Activated naive CD4-positive, alpha-beta T cell treated with anti-CD3 and anti-CD28 coated beads for 36 hours (primary cell): ENCODE measurements at regions of chr6 and their contacts with region 1.

Region 1: GRCh38 chr6:87825821-87826221 is 123.8 kb upstream of the AKIRIN2 start:
- DNase-seq: no peak
- H3K4me3 Mint-ChIP-seq: no peak overlapping the region
- H3K27ac Mint-ChIP-seq: no peak overlapping the region
- H3K4me1 Mint-ChIP-seq: peaks cover 14% of the 10 kb centered on the region
- H3K27me3 Mint-ChIP-seq: no peaks in the 10 kb centered on the region

Region 2: GRCh38 chr6:86380571-86381136 is 1445.2 kb before region 1 on chr6:
- CTCF ChIA-PET with region 1: no interaction called
- intact Hi-C with region 1: no loop called
- DNase-seq: no peak
- H3K4me3 Mint-ChIP-seq: no peak overlapping the region
- H3K27ac Mint-ChIP-seq: no peak overlapping the region
- H3K4me1 Mint-ChIP-seq: no peaks in the 10 kb centered on the region
- H3K27me3 Mint-ChIP-seq: no peaks in the 10 kb centered on the region

Region 3: DNA sequence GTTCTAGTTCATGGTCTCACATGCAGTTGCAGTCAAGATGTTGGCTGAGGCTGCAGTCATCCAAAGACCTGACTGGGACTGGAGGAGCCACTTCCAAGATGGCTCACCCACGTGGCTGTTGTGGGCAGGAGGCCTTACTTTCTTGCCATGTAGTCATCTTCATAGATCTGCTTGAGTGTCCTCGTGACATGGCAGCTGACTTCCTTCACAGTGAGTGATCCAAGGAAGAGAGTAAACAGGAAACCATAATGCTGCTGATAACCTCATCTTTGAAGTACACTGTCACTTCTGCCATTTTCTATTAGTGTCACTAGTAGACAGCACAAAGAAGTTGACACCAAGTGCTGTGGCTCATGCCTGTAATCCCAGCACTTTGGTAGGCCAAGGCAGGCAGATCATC is 83.7 kb before region 1 on chr6:
- CTCF ChIA-PET with region 1: no interaction called
- intact Hi-C with region 1: loop called (anchors 5 kb)
- DNase-seq: peak; percentile 76
- H3K4me3 Mint-ChIP-seq: no peak overlapping the region
- H3K27ac Mint-ChIP-seq: no peak overlapping the region
- H3K4me1 Mint-ChIP-seq: peaks cover 26% of the 10 kb centered on the region
- H3K27me3 Mint-ChIP-seq: no peaks in the 10 kb centered on the region